Endothelial cell of umbilical vein (primary cell): ENCODE measurements at regions of chr1 and their contacts with region 1.

Region 1: DNA sequence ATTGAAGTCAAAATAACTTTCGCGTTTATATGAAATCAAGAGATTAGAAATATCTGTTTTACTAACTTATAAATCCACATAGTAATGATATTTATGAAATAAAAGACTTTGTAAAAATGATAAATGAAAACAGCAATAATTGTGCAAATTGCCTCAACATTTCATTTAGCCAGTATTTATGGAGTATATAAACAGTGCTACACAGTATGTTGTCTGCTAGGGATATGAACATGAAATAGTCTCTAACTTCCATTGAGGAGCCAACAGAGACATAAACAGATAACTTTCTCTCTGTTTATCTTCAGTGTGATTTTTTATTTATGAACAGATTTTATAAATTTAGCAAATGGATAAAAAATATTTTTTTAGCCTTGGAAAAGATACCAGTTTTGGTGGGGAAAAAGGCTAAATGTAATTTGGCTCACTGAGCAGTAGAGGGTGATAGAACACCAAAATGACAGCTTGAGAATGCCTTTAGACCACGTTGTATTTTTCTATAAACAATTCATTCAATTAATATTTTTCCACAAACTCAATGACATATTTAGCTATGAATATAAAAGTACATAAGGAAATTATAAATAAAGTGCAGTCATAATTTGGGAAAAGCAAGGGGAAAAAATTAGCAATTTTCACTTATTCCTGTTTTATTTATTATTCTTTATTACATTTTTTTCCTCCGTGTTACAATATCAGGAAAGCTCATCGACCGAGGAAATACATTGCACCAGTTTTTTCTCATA is 47.5 kb upstream of the EEIG2 start:
- DNase-seq: peak; percentile 39
- H3K4me3 ChIP-seq: no peak overlapping the region
- H3K27ac ChIP-seq: no peak overlapping the region
- H3K4me1 ChIP-seq: no peaks in the 10 kb centered on the region
- H3K27me3 ChIP-seq: peaks cover 2 to 9% of the 10 kb centered on the region in 2 experiments
- CTCF ChIP-seq: peak; percentile 43 to 53
- POLR2A ChIP-seq: no peak

Region 2: GRCh38 chr1:108482708-108483107 is 29.7 kb before region 1 on chr1:
- CTCF ChIA-PET with region 1: no interaction called
- POLR2A ChIA-PET with region 1: no interaction called
- dilution Hi-C with region 1: no loop called
- intact Hi-C with region 1: no loop called
- DNase-seq: no peak
- H3K4me3 ChIP-seq: no peak overlapping the region
- H3K27ac ChIP-seq: no peak overlapping the region
- H3K4me1 ChIP-seq: no peaks in the 10 kb centered on the region
- H3K27me3 ChIP-seq: no peaks in the 10 kb centered on the region
- CTCF ChIP-seq: no peak
- POLR2A ChIP-seq: no peak

Region 3: DNA sequence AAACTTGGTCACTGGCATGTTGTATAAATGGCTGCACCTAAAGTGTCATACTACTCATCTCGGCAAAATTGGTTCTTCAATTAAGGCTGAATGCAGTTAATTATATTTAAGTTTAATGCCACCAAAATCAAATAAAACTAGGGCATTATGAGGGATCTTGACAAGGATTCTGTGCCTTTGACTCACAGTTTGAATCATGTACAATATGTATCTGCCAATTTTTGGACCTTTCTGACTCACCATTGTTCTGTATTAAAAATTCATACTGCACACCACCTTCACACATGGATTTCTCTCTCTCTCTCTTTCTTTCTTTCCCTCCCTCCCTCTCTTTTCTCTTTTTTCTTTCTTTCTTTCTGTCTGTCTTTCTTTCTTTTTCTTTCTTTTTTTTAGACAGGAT is 220.0 kb after region 1 on chr1:
- CTCF ChIA-PET with region 1: no interaction called
- POLR2A ChIA-PET with region 1: no interaction called
- dilution Hi-C with region 1: no loop called
- intact Hi-C with region 1: no loop called
- DNase-seq: no peak
- H3K4me3 ChIP-seq: no peak overlapping the region
- H3K27ac ChIP-seq: no peak overlapping the region
- H3K4me1 ChIP-seq: no peaks in the 10 kb centered on the region
- H3K27me3 ChIP-seq: peaks cover 3 to 16% of the 10 kb centered on the region in 2 experiments
- CTCF ChIP-seq: no peak
- POLR2A ChIP-seq: no peak

Region 4: GRCh38 chr1:108801101-108801500 is 288.7 kb after region 1 on chr1:
- CTCF ChIA-PET with region 1: no interaction called
- POLR2A ChIA-PET with region 1: no interaction called
- dilution Hi-C with region 1: no loop called
- intact Hi-C with region 1: no loop called
- DNase-seq: peak; percentile 46
- H3K4me3 ChIP-seq: no peak overlapping the region
- H3K27ac ChIP-seq: peak overlapping the region; percentile 10
- H3K4me1 ChIP-seq: peaks cover 16% of the 10 kb centered on the region
- H3K27me3 ChIP-seq: no peaks in the 10 kb centered on the region
- CTCF ChIP-seq: no peak
- POLR2A ChIP-seq: no peak

Region 5: DNA sequence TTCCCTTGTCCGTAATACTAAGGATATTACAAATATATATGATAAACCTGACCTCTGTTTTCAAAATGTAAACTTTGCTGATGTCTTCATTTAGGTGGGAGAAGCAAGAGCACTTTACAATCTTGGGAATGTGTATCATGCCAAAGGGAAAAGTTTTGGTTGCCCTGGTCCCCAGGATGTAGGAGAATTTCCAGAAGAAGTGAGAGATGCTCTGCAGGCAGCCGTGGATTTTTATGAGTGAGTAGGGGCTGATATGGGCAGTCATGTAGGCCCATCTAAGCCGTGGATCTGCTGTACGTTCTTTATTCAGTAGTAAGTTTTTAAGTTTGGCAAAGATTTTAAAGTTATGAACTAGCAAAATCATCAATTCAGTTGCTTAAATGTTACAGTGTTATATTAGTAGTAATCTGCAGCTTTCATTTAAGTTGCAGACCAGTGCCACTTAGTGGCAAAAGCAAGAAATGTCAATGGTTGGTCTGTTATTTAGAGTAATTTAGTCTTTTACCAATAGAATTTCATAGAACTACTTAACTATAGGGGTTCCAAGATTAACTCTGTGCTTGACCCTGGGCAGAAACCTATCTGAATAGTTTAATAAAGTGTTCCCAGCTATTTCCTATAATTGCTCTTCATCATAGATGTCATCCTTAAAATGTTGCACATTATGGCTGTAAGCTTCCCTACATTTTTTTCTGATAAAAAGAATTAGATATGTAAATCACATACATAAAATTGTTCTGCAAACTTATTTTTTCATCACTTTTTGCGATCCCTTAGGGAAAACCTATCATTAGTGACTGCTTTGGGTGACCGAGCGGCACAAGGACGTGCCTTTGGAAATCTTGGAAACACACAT is 385.7 kb after region 1 on chr1:
- CTCF ChIA-PET with region 1: interaction called, 19 read pairs
- POLR2A ChIA-PET with region 1: no interaction called
- dilution Hi-C with region 1: no loop called
- intact Hi-C with region 1: loop called (anchors 1 kb)
- DNase-seq: peak; percentile 66
- H3K4me3 ChIP-seq: no peak overlapping the region
- H3K27ac ChIP-seq: no peak overlapping the region
- H3K4me1 ChIP-seq: peaks cover 4% of the 10 kb centered on the region
- H3K27me3 ChIP-seq: no peaks in the 10 kb centered on the region
- CTCF ChIP-seq: peak; percentile 36 to 45
- POLR2A ChIP-seq: no peak

Region 6: GRCh38 chr1:109061183-109061582 is 548.8 kb after region 1 on chr1:
- CTCF ChIA-PET with region 1: no interaction called
- POLR2A ChIA-PET with region 1: no interaction called
- dilution Hi-C with region 1: no loop called
- intact Hi-C with region 1: no loop called
- DNase-seq: no peak
- H3K4me3 ChIP-seq: no peak overlapping the region
- H3K27ac ChIP-seq: no peak overlapping the region
- H3K4me1 ChIP-seq: no peaks in the 10 kb centered on the region
- H3K27me3 ChIP-seq: no peaks in the 10 kb centered on the region
- CTCF ChIP-seq: no peak
- POLR2A ChIP-seq: no peak